Activated CD8-positive, alpha-beta T cell treated with anti-CD3 and anti-CD28 coated beads for 36 hours (primary cell): ENCODE measurements at regions of chr5 and their contacts with region 1.

Region 1: DNA sequence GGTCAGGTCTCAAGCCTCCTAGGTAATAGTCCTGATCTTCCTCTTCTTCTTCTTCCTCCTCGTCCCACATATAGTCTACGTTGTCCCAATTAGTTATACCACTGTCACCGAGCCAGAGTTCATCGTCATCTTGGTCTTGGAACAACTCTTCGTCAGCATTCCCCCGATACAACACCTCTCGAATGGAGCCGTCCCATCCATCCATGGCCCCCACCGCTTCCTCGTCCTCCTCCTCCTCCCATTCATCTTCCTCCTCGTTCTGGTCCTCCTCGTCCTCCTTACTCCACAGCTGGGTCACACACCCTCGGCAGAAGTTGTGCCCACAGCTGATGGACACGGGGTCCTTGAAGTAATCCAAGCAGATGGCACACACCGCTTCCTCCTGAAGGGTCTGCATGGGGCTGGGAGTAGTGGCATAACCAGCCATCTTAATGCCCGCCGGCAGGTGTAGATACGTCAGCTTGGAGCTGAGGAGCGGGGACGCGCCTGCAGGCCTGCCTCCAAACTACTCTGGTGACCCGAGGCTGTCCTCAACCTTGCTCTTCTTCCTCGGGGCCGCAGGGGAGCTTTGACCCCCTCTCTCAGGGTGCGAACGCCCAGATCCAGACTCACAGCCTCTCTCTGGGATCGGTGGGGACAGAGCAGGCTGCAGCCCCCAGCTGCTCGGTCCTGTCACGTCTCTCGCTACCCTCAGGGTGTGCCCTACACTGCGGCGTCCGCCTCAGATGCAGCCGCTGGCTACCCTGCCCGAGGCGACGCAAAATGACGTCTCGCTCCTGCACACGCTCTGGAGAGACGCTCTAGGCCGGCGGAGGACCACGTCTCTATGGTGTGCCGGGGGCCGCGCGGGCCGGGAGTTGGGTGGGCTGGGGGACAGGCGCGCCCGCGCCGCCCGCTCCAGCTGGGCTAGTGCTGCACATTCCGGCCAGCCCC is at the start of gene TRIM52:
- DNase-seq: peak; percentile 95
- ATAC-seq: peak; percentile 88
- H3K4me3 Mint-ChIP-seq: peak within 1 kb of the TSS; percentile 93
- H3K27ac Mint-ChIP-seq: peak within 1 kb of the TSS; percentile 93
- H3K4me1 Mint-ChIP-seq: peaks cover 32% of the 10 kb centered on the region
- H3K27me3 Mint-ChIP-seq: no peaks in the 10 kb centered on the region
- CTCF ChIP-seq: no peak
- total RNA-seq, gene TRIM52: 13.2 to 13.8 TPM

Region 2: DNA sequence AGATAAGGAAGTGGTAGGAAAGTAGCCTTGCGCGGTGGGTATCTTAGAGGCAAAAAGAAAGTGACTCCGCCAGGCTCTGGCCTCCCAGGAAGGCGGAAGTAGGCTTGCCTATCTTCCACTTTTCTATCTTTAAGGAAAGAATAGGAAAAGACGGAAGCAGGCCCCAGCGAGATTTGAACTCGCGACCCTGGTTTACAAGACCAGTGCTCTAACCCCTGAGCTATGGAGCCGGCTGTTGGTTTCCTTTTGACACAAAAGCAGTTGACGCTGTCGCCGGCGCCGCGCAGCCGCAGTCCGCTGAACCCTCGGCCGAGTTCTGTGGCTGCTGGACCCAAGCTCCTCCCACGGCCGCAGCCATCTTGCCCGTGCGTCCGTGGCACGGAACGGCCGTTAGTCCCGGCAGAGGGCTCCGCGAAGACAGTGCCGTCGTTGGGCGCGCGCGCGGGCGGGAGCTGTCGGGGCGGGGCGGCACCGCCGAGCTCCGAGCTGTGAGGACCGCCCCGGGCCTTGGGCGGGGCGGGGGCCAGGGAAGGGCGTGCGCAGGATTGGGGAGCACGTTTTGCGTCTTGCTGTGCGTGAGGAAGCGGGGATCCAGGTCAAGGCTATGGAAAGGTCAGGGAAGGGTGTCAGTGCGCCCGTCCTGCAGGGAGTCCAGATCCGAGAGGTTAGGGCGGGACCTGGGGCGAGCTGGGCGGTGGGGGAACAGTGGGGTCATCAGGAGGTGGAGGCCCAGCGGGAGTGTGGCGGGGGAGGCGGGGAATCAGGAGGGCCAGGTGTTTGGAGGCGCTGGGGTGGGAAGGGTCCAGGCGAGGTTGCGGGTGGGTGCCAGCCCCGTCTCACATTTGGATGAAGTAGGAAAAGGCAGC is 68.9 kb before region 1 on chr5:
- CTCF ChIA-PET with region 1: interaction called, 4 read pairs
- POLR2A ChIA-PET with region 1: interaction called, 22 read pairs
- intact Hi-C with region 1: no loop called
- DNase-seq: peak; percentile 94
- ATAC-seq: peak; percentile 74
- H3K4me3 Mint-ChIP-seq: peak overlapping the region; percentile 91
- H3K27ac Mint-ChIP-seq: peak overlapping the region; percentile 97
- H3K4me1 Mint-ChIP-seq: peaks cover 27% of the 10 kb centered on the region
- H3K27me3 Mint-ChIP-seq: peaks cover 2% of the 10 kb centered on the region
- CTCF ChIP-seq: no peak

Region 3: GRCh38 chr5:181212934-181213333 is 47.7 kb before region 1 on chr5:
- CTCF ChIA-PET with region 1: no interaction called
- POLR2A ChIA-PET with region 1: no interaction called
- intact Hi-C with region 1: no loop called
- DNase-seq: no peak
- ATAC-seq: no peak
- H3K4me3 Mint-ChIP-seq: no peak overlapping the region
- H3K27ac Mint-ChIP-seq: no peak overlapping the region
- H3K4me1 Mint-ChIP-seq: peaks cover 27% of the 10 kb centered on the region
- H3K27me3 Mint-ChIP-seq: no peaks in the 10 kb centered on the region
- CTCF ChIP-seq: no peak

Region 4: DNA sequence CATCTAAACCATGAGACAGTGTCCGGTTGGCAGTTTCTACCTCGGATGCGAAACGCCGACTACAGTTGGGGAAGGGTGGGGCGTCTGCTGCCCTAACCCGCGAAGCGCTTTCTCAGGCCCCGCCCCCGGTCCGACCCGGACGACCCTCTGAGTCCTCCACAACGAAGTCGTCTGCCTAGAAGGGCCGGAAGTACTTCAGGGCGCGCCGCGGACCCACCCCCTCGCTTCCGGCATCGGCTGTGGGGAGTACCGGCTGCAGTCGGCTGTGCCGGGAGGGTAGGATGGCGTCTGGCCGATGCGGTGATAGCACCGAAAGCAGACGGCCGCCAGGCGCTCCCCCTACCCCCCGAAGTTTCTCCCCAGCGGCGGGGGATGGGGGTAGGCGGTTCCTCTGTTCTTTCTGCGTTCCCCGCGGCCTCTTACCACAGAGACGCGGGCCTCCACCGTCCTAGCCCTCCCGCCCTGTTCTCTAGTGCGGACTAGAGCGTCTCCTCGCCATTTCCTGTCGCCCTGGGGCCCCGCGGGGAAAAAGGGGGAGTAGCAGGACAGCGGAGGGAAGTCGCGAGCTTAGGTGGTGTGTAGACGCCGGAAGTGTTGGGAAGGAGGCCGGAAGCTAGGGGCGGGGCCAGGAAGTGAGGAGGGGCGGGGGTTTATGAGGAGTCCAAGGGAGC is 37.5 kb before region 1 on chr5 and contains the start of gene TRIM41:
- CTCF ChIA-PET with region 1: no interaction called
- POLR2A ChIA-PET with region 1: interaction called, 746 read pairs
- intact Hi-C with region 1: loop called (anchors 5 kb)
- DNase-seq: peak; percentile 99
- ATAC-seq: peak; percentile 64
- H3K4me3 Mint-ChIP-seq: peak within 1 kb of the TSS; percentile 91
- H3K27ac Mint-ChIP-seq: peak within 1 kb of the TSS; percentile 97
- H3K4me1 Mint-ChIP-seq: peaks cover 48% of the 10 kb centered on the region
- H3K27me3 Mint-ChIP-seq: peaks cover 5% of the 10 kb centered on the region
- CTCF ChIP-seq: no peak
- total RNA-seq, gene TRIM41: 30.6 to 31.5 TPM

Region 5: DNA sequence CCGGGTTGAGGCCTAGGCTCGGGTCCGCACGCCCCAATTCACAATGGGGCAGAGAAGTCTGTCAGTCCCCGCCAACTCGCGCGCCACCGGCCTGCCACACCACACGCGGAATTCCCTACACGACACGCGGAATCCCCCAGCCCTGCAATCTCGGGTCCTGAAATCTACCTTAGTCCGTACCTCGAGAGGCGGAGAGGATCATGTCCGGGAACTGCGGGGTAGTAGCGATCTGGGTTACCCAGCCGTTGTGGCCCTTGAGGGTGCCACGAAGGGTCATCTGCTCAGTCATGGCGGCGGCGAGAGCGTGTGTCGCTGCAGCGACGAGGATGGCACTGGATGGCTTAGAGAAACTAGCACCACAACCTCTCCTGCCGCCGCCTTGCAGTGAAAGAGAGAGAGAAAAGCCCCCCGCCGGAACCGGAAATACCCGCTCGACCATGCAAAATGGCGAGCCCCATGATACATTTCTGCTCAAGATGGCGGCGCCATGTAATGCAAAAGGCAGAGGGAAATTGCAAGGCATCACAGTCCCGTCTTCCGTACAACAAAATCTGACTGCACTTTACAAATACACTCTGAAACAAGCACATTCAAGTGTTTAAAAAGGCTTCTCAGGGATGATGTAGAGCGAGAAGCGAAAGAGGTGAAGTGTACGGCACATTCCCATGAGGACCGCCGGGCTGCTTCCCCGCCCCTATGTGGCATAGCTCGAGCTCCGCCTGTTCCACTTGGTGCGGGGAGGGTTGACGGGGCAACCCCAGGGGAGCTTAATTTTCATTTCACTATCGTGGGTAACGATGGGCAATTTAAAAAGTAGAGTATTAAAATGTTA is 16.9 kb before region 1 on chr5 and contains the start of gene RACK1:
- CTCF ChIA-PET with region 1: interaction called, 10 read pairs
- POLR2A ChIA-PET with region 1: interaction called, 746 read pairs
- intact Hi-C with region 1: no loop called
- DNase-seq: peak; percentile 94
- ATAC-seq: peak; percentile 68
- H3K4me3 Mint-ChIP-seq: peak within 1 kb of the TSS; percentile 99
- H3K27ac Mint-ChIP-seq: peak within 1 kb of the TSS; percentile 100
- H3K4me1 Mint-ChIP-seq: peaks cover 42% of the 10 kb centered on the region
- H3K27me3 Mint-ChIP-seq: no peaks in the 10 kb centered on the region
- CTCF ChIP-seq: no peak
- total RNA-seq, gene RACK1: 2,759 to 2,801 TPM